ENCODE measurements at regions of chr3 and their contacts with region 1.

Region 1: DNA sequence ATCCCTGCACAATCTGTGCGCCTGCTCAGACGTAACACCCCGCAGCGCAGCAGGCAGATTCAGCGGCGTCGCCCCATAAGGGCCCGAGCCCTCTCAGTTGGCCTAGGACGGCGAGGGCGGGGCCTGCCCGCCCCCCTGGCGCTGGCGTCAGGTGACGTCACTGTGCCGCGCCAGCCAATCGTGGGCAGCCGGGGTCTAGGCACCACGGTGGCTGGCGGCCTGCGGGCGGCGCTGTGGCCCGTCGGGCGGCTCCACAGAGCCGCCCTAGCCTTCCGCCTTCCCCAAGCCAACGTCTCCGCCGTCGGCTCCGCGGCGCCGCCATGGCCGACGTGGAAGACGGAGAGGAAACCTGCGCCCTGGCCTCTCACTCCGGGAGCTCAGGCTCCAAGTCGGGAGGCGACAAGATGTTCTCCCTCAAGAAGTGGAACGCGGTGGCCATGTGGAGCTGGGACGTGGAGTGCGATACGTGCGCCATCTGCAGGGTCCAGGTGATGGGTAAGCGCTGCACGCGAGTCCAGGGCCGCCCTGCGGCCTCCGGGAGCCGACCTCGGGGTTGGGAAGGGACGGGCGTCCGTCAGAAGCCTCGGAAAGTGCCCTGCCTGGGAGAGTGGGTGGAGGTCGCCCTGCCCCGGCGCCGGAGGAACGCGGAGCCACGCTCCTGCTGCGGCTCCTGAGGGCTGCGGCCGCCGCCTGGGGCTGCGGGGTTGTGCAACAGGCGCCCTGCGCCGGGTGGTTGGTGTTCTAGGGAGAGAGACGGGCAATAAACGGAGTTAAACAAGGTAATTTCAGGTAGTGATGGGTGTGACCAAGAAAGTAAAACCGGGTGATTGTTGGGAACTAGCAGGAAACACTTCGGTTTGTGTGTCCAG is at the start of gene RNF7:
- DNase-seq: peak; percentile 96
- H3K4me3 Mint-ChIP-seq: peak within 1 kb of the TSS; percentile 90
- H3K27ac Mint-ChIP-seq: peak within 1 kb of the TSS; percentile 98
- H3K4me1 Mint-ChIP-seq: peaks cover 18% of the 10 kb centered on the region
- H3K27me3 Mint-ChIP-seq: peaks cover 10% of the 10 kb centered on the region
- CTCF ChIP-seq: peak; percentile 85
- total RNA-seq, gene RNF7: 96.1 and 112 TPM in 2 replicates

Region 2: GRCh38 chr3:141699897-141700296 is 38.4 kb before region 1 on chr3:
- CTCF ChIA-PET with region 1: no interaction called
- POLR2A ChIA-PET with region 1: no interaction called
- intact Hi-C with region 1: no loop called
- DNase-seq: no peak
- H3K4me3 Mint-ChIP-seq: no peak overlapping the region
- H3K27ac Mint-ChIP-seq: no peak overlapping the region
- H3K4me1 Mint-ChIP-seq: no peaks in the 10 kb centered on the region
- H3K27me3 Mint-ChIP-seq: peaks cover 11% of the 10 kb centered on the region
- CTCF ChIP-seq: no peak

Region 3: DNA sequence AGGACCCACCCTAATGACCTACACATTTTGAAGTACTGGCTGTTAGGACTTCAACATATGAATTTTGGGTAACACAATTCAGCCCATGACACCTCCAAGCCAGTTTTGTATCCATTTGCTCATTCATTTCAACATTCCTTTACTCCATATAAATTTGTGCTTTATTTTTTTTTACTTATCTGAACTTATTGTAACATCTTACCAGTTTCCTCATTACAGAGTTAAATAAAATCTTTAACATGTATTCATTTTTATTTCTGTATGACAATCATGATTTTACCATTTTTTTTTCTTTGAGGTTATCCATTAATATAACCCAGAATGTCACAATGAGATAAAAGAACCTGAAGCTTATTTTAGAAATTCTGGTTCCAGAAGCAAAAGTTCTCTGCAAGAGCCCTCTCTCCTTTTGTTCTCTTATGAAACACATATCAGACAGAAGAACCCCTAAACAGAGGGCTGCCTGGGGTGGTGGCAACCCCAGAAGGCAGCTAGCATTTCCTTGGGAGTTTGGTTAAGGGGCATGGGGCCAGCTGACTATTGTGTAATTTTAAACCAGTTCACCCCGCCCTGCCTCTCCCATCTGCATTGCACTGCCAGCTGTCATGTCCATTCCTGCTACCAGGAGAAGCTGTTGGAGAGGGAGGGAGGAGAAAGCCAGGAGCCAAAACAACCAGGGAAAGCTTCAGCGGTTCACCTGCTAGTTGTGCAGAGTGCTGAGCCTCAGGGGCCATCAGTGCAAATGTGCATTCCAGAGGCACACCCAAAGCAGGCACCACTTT is 90.4 kb after region 1 on chr3:
- CTCF ChIA-PET with region 1: interaction called, 5 read pairs
- POLR2A ChIA-PET with region 1: interaction called, 66 read pairs
- intact Hi-C with region 1: no loop called
- DNase-seq: peak; percentile 92
- H3K4me3 Mint-ChIP-seq: no peak overlapping the region
- H3K27ac Mint-ChIP-seq: peak overlapping the region; percentile 35
- H3K4me1 Mint-ChIP-seq: peaks cover 23% of the 10 kb centered on the region
- H3K27me3 Mint-ChIP-seq: no peaks in the 10 kb centered on the region
- CTCF ChIP-seq: no peak

Region 4: GRCh38 chr3:141894524-141895178 is 156.4 kb after region 1 on chr3:
- CTCF ChIA-PET with region 1: interaction called, 13 read pairs
- POLR2A ChIA-PET with region 1: interaction called, 20 read pairs
- intact Hi-C with region 1: no loop called
- DNase-seq: peak; percentile 84
- H3K4me3 Mint-ChIP-seq: no peak overlapping the region
- H3K27ac Mint-ChIP-seq: peak overlapping the region; percentile 87
- H3K4me1 Mint-ChIP-seq: peaks cover 37% of the 10 kb centered on the region
- H3K27me3 Mint-ChIP-seq: no peaks in the 10 kb centered on the region
- CTCF ChIP-seq: no peak

Region 5: DNA sequence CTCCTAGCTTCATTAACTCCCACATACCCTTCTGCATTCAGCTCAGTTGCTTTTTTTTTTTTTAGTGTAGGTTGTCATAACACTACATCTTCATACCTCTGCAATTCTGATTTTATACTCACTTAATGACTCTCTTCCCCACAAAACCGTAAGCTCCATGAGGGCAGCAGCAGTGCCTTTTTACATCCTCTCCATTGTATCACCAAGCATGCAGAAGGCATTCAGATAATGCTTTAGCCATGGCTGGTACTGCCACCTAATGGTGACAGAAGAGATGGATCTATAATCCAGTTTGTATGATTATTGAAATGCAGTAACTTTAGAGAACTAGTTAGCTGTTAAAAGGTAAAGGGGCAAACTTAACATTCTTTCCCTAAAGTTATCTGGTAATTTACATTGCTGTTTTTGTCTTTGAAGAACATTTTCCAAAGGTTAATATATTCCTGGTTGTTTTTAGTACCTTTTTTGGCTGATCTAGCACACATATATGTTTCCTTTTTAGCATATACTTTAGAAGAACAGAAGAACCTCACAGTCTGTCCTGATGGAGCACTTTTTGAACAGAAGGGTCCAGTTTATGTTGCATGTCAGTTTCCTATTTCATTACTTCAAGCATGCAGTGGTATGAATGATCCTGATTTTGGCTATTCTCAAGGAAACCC is 175.0 kb after region 1 on chr3:
- CTCF ChIA-PET with region 1: interaction called, 26 read pairs
- POLR2A ChIA-PET with region 1: interaction called, 9 read pairs
- intact Hi-C with region 1: loop called (anchors 1 kb)
- DNase-seq: peak; percentile 74
- H3K4me3 Mint-ChIP-seq: no peak overlapping the region
- H3K27ac Mint-ChIP-seq: no peak overlapping the region
- H3K4me1 Mint-ChIP-seq: peaks cover 13% of the 10 kb centered on the region
- H3K27me3 Mint-ChIP-seq: no peaks in the 10 kb centered on the region
- CTCF ChIP-seq: peak; percentile 53